Activated CD4-positive, alpha-beta memory T cell treated with anti-CD3 and anti-CD28 coated beads for 36 hours (primary cell): ENCODE measurements at regions of chr19 and their contacts with region 1.

Region 1: GRCh38 chr19:49097455-49098288 is 12.4 kb downstream of the SNRNP70 start:
- DNase-seq: peak; percentile 79
- H3K4me3 Mint-ChIP-seq: no peak overlapping the region
- H3K27ac Mint-ChIP-seq: no peak overlapping the region
- H3K4me1 Mint-ChIP-seq: peaks cover 2% of the 10 kb centered on the region
- H3K27me3 Mint-ChIP-seq: no peaks in the 10 kb centered on the region

Region 2: DNA sequence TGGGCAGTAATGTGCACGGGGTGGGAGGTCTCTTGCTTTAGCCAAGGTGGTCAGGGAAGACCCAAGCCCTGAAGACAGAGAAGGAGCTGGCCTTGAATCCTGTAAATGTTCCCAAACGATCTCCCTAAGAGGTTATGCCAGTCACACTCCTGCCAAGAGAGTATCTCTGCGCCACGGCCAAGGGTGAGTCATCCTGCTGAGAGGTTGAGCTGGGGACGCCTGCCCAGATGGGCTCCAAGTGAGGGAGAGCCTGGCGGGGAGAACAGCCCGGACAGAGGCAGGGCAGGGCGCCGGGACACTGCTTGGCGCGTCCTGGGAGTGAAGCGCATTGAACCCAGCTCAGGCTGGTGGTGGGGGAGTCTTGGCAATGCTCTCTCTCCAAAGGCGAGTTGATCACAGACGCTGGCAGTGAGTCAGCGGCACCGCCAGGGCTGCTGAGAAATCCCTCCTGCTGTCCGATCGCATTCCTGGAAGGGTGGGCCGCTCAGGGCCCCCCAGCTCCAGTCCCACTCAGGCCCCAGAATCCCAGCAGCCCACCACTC is 529.3 kb before region 1 on chr19:
- CTCF ChIA-PET with region 1: no interaction called
- POLR2A ChIA-PET with region 1: no interaction called
- intact Hi-C with region 1: no loop called
- DNase-seq: no peak
- H3K4me3 Mint-ChIP-seq: no peak overlapping the region
- H3K27ac Mint-ChIP-seq: no peak overlapping the region
- H3K4me1 Mint-ChIP-seq: no peaks in the 10 kb centered on the region
- H3K27me3 Mint-ChIP-seq: no peaks in the 10 kb centered on the region

Region 3: GRCh38 chr19:48999481-49000325 is 98.0 kb before region 1 on chr19:
- CTCF ChIA-PET with region 1: interaction called, 10 read pairs
- POLR2A ChIA-PET with region 1: no interaction called
- intact Hi-C with region 1: no loop called
- DNase-seq: peak; percentile 84
- H3K4me3 Mint-ChIP-seq: no peak overlapping the region
- H3K27ac Mint-ChIP-seq: peak overlapping the region; percentile 38
- H3K4me1 Mint-ChIP-seq: peaks cover 18% of the 10 kb centered on the region
- H3K27me3 Mint-ChIP-seq: no peaks in the 10 kb centered on the region

Region 4: GRCh38 chr19:49085020-49085867 is 12.4 kb before region 1 on chr19 and contains the start of gene SNRNP70:
- CTCF ChIA-PET with region 1: interaction called, 42 read pairs
- POLR2A ChIA-PET with region 1: no interaction called
- intact Hi-C with region 1: no loop called
- DNase-seq: peak; percentile 99
- H3K4me3 Mint-ChIP-seq: peak within 1 kb of the TSS; percentile 96
- H3K27ac Mint-ChIP-seq: peak within 1 kb of the TSS; percentile 82
- H3K4me1 Mint-ChIP-seq: peaks cover 31% of the 10 kb centered on the region
- H3K27me3 Mint-ChIP-seq: no peaks in the 10 kb centered on the region
- total RNA-seq, gene SNRNP70: 180 to 190 TPM

Region 5: DNA sequence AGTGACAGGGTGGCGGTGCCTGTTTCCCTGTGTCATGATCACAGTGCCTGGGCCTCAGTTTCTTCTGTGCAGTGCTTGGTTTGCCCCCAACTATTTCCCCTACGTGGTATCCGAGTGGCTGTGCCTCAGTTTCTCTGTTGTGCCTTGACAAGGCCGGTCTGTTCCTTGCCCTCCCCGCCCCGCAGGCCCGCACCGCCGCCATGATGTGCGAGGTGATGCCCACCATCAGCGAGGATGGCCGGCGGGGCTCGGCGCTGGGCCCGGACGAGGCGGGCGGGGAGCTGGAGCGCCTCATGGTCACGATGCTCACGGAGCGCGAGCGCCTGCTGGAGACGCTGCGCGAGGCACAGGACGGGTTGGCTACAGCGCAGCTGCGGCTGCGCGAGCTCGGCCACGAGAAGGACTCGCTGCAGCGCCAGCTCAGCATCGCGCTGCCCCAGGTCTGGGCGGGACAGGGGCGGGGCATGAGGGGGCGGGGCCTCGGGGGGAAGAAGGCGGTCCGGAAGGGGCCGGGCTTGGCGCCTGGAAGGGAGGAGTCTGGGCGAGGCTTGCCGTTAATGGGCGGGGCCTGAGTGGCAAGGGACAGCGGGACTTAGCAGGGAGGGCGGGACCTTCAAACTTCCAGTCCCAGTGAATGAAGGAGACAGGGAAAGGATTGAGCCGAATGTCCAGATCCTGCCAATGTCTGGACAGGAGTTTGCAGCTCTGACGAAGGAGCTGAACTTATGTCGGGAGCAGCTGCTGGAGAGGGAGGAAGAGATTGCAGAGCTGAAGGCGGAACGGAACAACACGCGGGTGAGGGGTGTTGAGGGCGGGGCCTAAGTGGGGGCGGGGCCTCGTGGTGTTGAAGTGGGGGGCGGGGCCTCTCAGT is 30.2 kb after region 1 on chr19:
- CTCF ChIA-PET with region 1: interaction called, 11 read pairs
- POLR2A ChIA-PET with region 1: interaction called, 3 read pairs
- intact Hi-C with region 1: no loop called
- DNase-seq: peak; percentile 97
- H3K4me3 Mint-ChIP-seq: peak overlapping the region; percentile 86
- H3K27ac Mint-ChIP-seq: peak overlapping the region; percentile 78
- H3K4me1 Mint-ChIP-seq: peaks cover 13% of the 10 kb centered on the region
- H3K27me3 Mint-ChIP-seq: no peaks in the 10 kb centered on the region

Region 6: DNA sequence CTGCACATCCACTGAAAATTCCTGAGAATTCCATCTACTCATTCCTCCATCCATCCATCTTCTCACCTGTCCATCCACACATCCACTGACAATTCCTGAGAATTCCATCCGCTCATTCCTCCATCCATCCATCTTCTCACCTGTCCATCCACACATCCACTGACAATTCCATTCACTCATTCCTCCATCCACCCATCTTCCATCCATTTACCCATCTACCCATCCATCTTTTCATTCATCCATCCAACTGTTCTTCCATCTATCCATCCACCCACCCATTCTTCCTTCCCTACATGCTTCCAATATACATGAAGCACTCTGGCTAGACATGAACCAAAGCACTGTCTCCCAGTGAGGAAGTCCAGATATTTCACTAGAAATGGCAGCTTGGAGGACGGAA is 75.5 kb after region 1 on chr19:
- CTCF ChIA-PET with region 1: no interaction called
- POLR2A ChIA-PET with region 1: no interaction called
- intact Hi-C with region 1: no loop called
- DNase-seq: no peak
- H3K4me3 Mint-ChIP-seq: no peak overlapping the region
- H3K27ac Mint-ChIP-seq: no peak overlapping the region
- H3K4me1 Mint-ChIP-seq: peaks cover 5% of the 10 kb centered on the region
- H3K27me3 Mint-ChIP-seq: peaks cover 6% of the 10 kb centered on the region

Region 7: GRCh38 chr19:49200238-49200862 is 102.7 kb after region 1 on chr19:
- CTCF ChIA-PET with region 1: interaction called, 54 read pairs
- POLR2A ChIA-PET with region 1: no interaction called
- intact Hi-C with region 1: loop called (anchors 1 kb)
- DNase-seq: peak; percentile 31
- H3K4me3 Mint-ChIP-seq: no peak overlapping the region
- H3K27ac Mint-ChIP-seq: no peak overlapping the region
- H3K4me1 Mint-ChIP-seq: no peaks in the 10 kb centered on the region
- H3K27me3 Mint-ChIP-seq: peaks cover 4% of the 10 kb centered on the region